ENCODE measurements at regions of chr20 and their contacts with region 1.

Region 1: GRCh38 chr20:57480444-57481160 is 44.3 kb downstream of the CTCFL start:
- DNase-seq: peak; percentile 86
- ATAC-seq: peak; percentile 78
- H3K4me3 ChIP-seq: peak overlapping the region in 3 of 5 experiments; percentile 17 to 52 (median 25)
- H3K4me3 Mint-ChIP-seq: peak overlapping the region; percentile 83
- H3K27ac ChIP-seq: peak overlapping the region in 1 of 2 donors; percentile 66
- H3K27ac Mint-ChIP-seq: peak overlapping the region; percentile 92
- H3K4me1 ChIP-seq: peaks cover 63 to 76% of the 10 kb centered on the region in 2 donors
- H3K4me1 Mint-ChIP-seq: peaks cover 72% of the 10 kb centered on the region
- H3K27me3 ChIP-seq: no peaks in the 10 kb centered on the region
- H3K27me3 Mint-ChIP-seq: no peaks in the 10 kb centered on the region
- CTCF ChIP-seq: no peak

Region 2: DNA sequence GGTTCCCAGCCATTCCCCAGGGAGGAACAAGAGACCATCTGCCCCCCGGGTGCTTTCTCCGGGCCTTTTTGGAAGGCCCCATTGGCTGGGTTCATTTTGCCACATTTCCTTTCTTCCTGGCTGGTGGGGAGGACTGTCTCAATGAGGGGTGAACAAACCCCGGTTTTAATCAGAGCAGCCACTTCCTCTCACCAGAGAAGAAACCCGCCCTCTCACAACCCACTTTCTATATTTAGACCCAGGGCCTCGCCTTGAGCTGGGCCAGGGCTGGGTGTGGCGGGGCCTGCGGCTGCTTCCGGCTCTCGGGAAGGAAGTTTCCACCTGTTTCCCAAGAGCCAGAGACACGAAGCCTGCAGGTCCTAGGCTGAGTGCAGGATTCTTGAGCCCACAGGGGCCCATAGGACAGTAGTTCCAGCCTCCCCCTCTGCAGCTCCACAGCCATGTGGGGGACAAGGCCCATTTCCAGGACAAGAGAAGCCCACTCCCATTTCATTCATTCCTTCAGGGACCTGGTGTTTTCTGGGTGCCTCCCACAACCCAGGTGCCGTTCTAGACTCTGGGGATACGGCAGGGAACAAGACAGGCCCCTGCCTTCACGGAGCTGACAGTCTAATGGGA is 47.6 kb before region 1 on chr20:
- CTCF ChIA-PET with region 1: interaction called, 4 read pairs
- POLR2A ChIA-PET with region 1: no interaction called
- intact Hi-C with region 1: loop called (anchors 5 kb)
- DNase-seq: peak; percentile 83
- ATAC-seq: peak; percentile 72
- H3K4me3 ChIP-seq: peak overlapping the region in 4 of 5 experiments; percentile 7 to 25 (median 18)
- H3K4me3 Mint-ChIP-seq: peak overlapping the region; percentile 56
- H3K27ac ChIP-seq: peak overlapping the region; percentile 87 to 93
- H3K27ac Mint-ChIP-seq: peak overlapping the region; percentile 89
- H3K4me1 ChIP-seq: peaks cover 76 to 85% of the 10 kb centered on the region in 2 donors
- H3K4me1 Mint-ChIP-seq: peaks cover 81% of the 10 kb centered on the region
- H3K27me3 ChIP-seq: no peaks in the 10 kb centered on the region
- H3K27me3 Mint-ChIP-seq: no peaks in the 10 kb centered on the region
- CTCF ChIP-seq: no peak

Region 3: GRCh38 chr20:57450419-57450818 is 30.2 kb before region 1 on chr20:
- CTCF ChIA-PET with region 1: interaction called, 5 read pairs
- POLR2A ChIA-PET with region 1: interaction called, 4 read pairs
- intact Hi-C with region 1: loop called (anchors 2 kb)
- DNase-seq: peak; percentile 78
- ATAC-seq: peak; percentile 82
- H3K4me3 ChIP-seq: peak overlapping the region; percentile 15 to 48 (median 36)
- H3K4me3 Mint-ChIP-seq: peak overlapping the region; percentile 86
- H3K27ac ChIP-seq: peak overlapping the region; percentile 50
- H3K27ac Mint-ChIP-seq: peak overlapping the region; percentile 73
- H3K4me1 ChIP-seq: peaks cover 38 to 56% of the 10 kb centered on the region in 2 donors
- H3K4me1 Mint-ChIP-seq: peaks cover 63% of the 10 kb centered on the region
- H3K27me3 ChIP-seq: no peaks in the 10 kb centered on the region
- H3K27me3 Mint-ChIP-seq: no peaks in the 10 kb centered on the region
- CTCF ChIP-seq: no peak

Region 4: GRCh38 chr20:57493091-57493615 is 12.6 kb after region 1 on chr20:
- CTCF ChIA-PET with region 1: interaction called, 21 read pairs
- POLR2A ChIA-PET with region 1: no interaction called
- intact Hi-C with region 1: loop called (anchors 1 kb)
- DNase-seq: no peak
- ATAC-seq: no peak
- H3K4me3 ChIP-seq: no peak overlapping the region
- H3K4me3 Mint-ChIP-seq: no peak overlapping the region
- H3K27ac ChIP-seq: no peak overlapping the region
- H3K27ac Mint-ChIP-seq: no peak overlapping the region
- H3K4me1 ChIP-seq: peaks cover 11 to 18% of the 10 kb centered on the region in 2 donors
- H3K4me1 Mint-ChIP-seq: peaks cover 38% of the 10 kb centered on the region
- H3K27me3 ChIP-seq: peaks cover 0 to under 1% (median 0%) of the 10 kb centered on the region in 4 experiments
- H3K27me3 Mint-ChIP-seq: peaks cover 3% of the 10 kb centered on the region
- CTCF ChIP-seq: no peak

Region 5: GRCh38 chr20:57709931-57710799 is 229.6 kb after region 1 on chr20 and contains the start of gene PMEPA1:
- CTCF ChIA-PET with region 1: no interaction called
- POLR2A ChIA-PET with region 1: no interaction called
- intact Hi-C with region 1: loop called (anchors 10 kb)
- DNase-seq: peak; percentile 97
- ATAC-seq: peak; percentile 86
- H3K4me3 ChIP-seq: peak within 1 kb of the TSS; percentile 59 to 96 (median 83)
- H3K4me3 Mint-ChIP-seq: peak within 1 kb of the TSS; percentile 99
- H3K27ac ChIP-seq: peak within 1 kb of the TSS; percentile 80 to 99
- H3K27ac Mint-ChIP-seq: peak within 1 kb of the TSS; percentile 92
- H3K4me1 ChIP-seq: peaks cover 49 to 55% of the 10 kb centered on the region in 2 donors
- H3K4me1 Mint-ChIP-seq: peaks cover 53% of the 10 kb centered on the region
- H3K27me3 ChIP-seq: no peaks in the 10 kb centered on the region
- H3K27me3 Mint-ChIP-seq: no peaks in the 10 kb centered on the region
- CTCF ChIP-seq: no peak
- total RNA-seq, gene PMEPA1: 37.4 and 38.7 TPM in 2 replicates